ENCODE measurements at regions of chr20 and their contacts with region 1.

Region 1: DNA sequence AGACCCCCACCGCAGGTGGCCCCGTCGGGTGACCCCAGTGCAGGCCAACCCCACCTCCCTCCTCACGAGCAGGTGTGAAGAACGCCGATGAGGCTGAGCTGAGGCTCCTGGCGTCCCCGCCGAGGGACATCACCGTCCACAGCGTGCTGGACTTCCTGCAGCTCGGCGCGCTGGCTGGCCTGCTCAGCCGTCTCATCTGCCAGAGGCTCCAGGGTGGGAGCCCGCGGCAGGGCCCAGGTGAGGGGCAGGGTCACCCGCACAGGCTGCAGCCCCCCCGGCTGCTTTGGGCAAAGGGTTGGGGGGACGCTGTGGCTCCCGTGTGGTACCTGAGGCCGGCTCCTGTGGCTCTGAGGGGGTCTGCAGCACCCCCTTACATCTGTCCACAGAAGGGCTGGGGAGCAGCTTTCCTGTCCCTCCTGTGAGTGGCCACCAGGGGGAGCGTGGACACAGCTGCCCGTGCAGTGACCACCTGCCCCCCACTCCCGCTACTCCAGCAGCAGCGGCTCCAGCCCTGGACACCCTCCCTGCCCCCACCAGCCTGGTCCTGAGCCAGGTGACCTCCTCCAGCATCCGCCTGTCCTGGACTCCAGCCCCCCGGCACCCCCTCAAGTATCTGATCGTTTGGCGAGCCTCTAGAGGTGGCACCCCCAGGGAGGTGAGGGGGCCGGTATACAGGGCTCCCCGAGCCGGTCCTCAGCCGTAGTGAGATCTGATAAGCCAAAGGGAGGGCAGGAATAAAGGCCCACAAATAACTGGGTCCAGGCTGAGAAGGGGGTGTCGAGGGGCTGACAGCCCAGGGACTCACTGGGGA is 16.5 kb downstream of the COL20A1 start:
- DNase-seq: peak; percentile 38
- H3K4me3 ChIP-seq: no peak overlapping the region
- H3K27ac ChIP-seq: no peak overlapping the region
- H3K4me1 ChIP-seq: peaks cover 14% of the 10 kb centered on the region
- H3K27me3 ChIP-seq: peaks cover 71% of the 10 kb centered on the region
- CTCF ChIP-seq: peak; percentile 93

Region 2: DNA sequence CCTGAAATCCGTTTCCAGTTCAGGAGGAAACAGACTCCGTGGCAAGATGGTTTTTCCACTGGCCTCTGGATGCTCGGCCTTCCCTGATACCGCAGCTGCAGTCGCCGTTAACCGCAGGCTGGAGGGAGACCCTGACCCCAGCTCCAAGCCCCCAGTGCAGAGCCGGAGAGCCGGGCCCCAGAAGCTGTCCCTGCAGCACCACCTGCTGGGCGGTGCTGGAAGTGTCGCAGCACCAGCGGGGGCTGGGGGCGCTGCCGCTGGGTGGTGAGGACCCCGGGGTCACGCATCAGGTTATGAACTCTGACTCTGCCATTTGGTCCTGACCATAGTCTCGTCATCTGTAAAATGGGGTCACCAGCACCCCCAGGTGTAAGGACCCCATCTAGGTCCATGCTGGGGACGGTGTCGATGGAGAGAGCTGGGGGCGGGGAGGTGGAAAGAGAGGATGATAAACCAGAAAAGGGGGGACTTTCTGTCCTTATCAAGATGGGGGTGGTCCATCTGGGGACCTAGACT is 72.4 kb after region 1 on chr20:
- intact Hi-C with region 1: loop called (anchors 5 kb)
- DNase-seq: no peak
- H3K4me3 ChIP-seq: no peak overlapping the region
- H3K27ac ChIP-seq: no peak overlapping the region
- H3K4me1 ChIP-seq: no peaks in the 10 kb centered on the region
- H3K27me3 ChIP-seq: peaks cover 76% of the 10 kb centered on the region
- CTCF ChIP-seq: peak; percentile 97

Region 3: DNA sequence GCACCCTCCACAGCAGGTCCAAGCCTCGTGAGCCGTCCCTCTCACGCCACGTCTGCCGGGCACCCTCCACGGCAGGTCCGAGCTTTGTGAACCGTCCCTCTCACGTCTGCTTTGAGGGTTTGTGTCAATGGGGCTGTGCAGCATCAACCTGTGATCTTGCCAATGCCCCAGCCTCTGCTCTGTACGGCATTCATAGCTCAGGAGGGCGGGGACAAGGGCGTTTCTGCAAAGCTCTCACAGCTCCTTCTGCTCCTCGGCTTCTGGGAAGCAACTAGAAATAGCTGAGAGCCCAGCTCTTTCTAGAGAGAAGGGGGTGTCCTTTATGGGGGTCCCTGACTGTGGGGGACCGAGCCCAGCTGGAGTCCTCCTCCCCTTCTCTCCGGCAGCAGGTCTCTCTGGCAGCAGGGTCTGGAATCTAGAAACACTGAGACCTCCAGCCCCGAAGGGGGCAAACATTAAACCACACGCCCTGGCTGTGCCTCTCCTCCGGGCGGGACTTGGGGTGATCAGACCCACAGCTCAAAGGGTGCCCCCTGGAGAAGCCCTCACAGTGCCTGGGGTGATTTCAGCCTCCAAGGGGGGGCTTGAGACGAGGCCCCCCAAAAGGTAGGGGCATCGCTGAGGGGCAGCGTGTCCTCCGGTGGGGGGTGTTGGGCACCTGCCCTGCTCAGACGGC is 92.9 kb after region 1 on chr20:
- intact Hi-C with region 1: no loop called
- DNase-seq: no peak
- H3K4me3 ChIP-seq: no peak overlapping the region
- H3K27ac ChIP-seq: no peak overlapping the region
- H3K4me1 ChIP-seq: no peaks in the 10 kb centered on the region
- H3K27me3 ChIP-seq: peaks cover 88% of the 10 kb centered on the region
- CTCF ChIP-seq: no peak